Left colon (tissue), 2 donors: ENCODE measurements at regions of chr7 and their contacts with region 1.

Region 1: DNA sequence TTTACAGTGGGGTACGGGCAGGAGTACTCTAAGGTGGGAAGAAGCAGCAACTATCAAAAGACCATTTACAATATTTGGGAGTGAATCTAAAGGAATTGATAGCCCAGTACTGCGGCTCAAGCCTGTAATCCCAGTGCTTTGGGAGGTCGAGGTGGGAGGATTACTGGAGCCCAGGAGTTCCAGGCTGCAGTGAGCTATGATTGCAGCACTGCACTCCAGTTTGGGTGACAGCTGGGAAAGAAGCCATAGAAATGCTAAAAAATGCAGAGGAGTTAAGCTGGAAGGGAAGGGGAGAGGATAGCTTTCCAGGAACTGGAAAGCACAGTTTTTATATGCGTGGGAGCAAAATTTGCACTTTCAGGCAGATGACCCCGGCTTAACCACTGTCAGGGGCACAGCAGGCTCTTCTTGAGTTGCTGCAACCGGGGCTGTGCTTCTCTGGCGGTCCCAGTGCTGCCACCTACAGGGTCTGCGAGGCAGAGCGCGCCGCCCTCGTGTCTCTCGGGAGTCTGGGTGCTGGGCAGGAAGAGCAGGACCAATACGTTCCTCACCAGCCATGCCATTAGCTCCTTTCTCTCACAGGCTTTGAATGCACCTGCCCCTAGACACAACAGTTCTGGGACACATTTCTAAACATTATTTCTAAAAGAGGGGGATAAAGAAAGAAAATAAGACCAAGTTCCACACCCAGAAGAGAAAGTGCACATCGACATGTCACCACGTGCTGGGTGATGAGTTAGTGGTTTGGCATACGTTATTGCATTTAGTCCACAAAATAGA is 10.1 kb upstream of the BMPER start:
- DNase-seq: peak; percentile 59 to 85
- ATAC-seq: peak; percentile 90

Region 2: GRCh38 chr7:33757562-33758165 is 137.6 kb before region 1 on chr7:
- intact Hi-C with region 1: loop called in 1 of 2 experiments (anchors 10 kb)
- DNase-seq: peak in 1 of 2 donors; percentile 31
- ATAC-seq: no peak